Dorsolateral prefrontal cortex (tissue), 120 donors: ENCODE measurements at regions of chr9 and their contacts with region 1.

Region 1: GRCh38 chr9:98998441-98999151 is 54.9 kb downstream of the COL15A1 start:
- DNase-seq: peak in 9 of 10 donors; percentile 67 to 83 (median 78)
- H3K4me3 ChIP-seq: peak overlapping the region in 38 of 59 donors; percentile 1 to 55 (median 32)
- H3K27ac ChIP-seq: peak overlapping the region in 3 of 59 donors; percentile 16 to 51 (median 23)
- H3K27me3 ChIP-seq: no peaks in the 10 kb centered on the region
- CTCF ChIP-seq: peak; percentile 48 to 97 (median 89)

Region 2: GRCh38 chr9:98848450-98849149 is 150.0 kb before region 1 on chr9:
- intact Hi-C with region 1: loop called (anchors 2 to 5 kb)
- DNase-seq: peak; percentile 90 to 95 (median 92)
- H3K4me3 ChIP-seq: peak overlapping the region in 57 of 59 donors; percentile 2 to 60 (median 39)
- H3K27ac ChIP-seq: peak overlapping the region in 13 of 59 donors; percentile 1 to 69 (median 33)
- H3K27me3 ChIP-seq: no peaks in the 10 kb centered on the region
- CTCF ChIP-seq: peak; percentile 80 to 99 (median 93)

Region 3: GRCh38 chr9:98867429-98868168 is 131.0 kb before region 1 on chr9:
- intact Hi-C with region 1: loop called in 1 of 2 experiments (anchors 5 kb)
- DNase-seq: peak in 1 of 10 donors; percentile 44
- H3K4me3 ChIP-seq: no peak overlapping the region
- H3K27ac ChIP-seq: no peak overlapping the region
- H3K27me3 ChIP-seq: peaks cover 0 to 2% (median 0%) of the 10 kb centered on the region in 45 donors
- CTCF ChIP-seq: no peak

Region 4: GRCh38 chr9:99104459-99105151 is 106.0 kb after region 1 on chr9 and contains the start of gene TGFBR1:
- intact Hi-C with region 1: loop called in 1 of 2 experiments (anchors 5 kb)
- DNase-seq: peak; percentile 87 to 98 (median 91)
- H3K4me3 ChIP-seq: peak within 1 kb of the TSS; percentile 54 to 88 (median 79)
- H3K27ac ChIP-seq: peak within 1 kb of the TSS in 55 of 59 donors; percentile 29 to 90 (median 77)
- H3K27me3 ChIP-seq: no peaks in the 10 kb centered on the region
- CTCF ChIP-seq: peak in 24 of 56 donors; percentile 8 to 52 (median 22)
- total RNA-seq, gene TGFBR1: 9.7 to 58.1 (median 21.3) TPM

Region 5: GRCh38 chr9:99140685-99141314 is 142.2 kb after region 1 on chr9:
- intact Hi-C with region 1: loop called (anchors 2 to 5 kb)
- DNase-seq: peak in 5 of 10 donors; percentile 21 to 54 (median 43)
- H3K4me3 ChIP-seq: peak overlapping the region in 1 of 59 donors; percentile 8
- H3K27ac ChIP-seq: peak overlapping the region in 2 of 59 donors; percentile 15 to 19
- H3K27me3 ChIP-seq: no peaks in the 10 kb centered on the region
- CTCF ChIP-seq: peak; percentile 24 to 97 (median 87)